IMR-90 (cell line): ENCODE measurements at regions of chr7 and their contacts with region 1.

Region 1: DNA sequence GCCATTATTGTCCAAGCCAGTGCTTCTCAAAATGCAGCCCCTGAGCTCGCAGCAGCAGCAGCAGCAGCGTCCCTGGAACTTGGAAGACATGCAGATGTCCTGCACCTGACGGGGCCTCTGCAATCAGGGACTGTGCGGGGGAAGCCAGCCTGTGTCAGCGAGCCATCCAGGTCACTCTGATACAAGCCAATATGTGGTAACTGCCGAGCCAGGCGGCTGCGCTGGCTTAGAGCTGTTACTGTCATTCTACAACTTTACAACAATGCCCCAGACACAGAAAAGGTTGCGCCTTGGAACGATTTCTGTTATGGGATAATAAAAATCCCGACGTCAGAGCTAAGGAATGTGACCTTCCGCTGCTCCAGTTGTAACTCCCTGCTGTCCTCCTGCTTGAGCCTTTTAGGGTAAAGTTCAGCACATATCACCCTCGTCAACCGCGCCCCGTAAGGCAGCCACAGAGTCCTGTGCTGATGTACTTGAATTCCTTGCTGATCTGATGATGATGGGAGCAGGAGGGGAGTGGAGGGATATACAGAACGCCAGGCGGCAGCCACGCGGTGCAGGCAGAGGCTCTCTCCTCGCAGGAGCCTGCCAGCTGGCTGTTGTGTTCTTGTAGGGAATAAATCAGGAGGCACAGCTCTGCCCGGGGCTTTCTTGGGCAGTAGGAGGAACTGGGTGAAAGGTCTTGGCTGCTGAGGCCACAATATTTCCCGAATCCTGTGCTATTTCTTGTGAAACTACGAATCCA is 20.0 kb upstream of the CRYGN start:
- DNase-seq: peak; percentile 86
- ATAC-seq: peak; percentile 93
- H3K4me3 ChIP-seq: peak overlapping the region; percentile 6; the same call in 1 of the 2 replicates
- H3K27ac ChIP-seq: peak overlapping the region; percentile 74
- H3K4me1 ChIP-seq: peaks cover 14% of the 10 kb centered on the region
- H3K27me3 ChIP-seq: no peaks in the 10 kb centered on the region
- CTCF ChIP-seq: peak; percentile 50
- POLR2A ChIP-seq: peak; percentile 22; the same call in 1 of the 2 replicates
- RAD21 ChIP-seq: peak; percentile 59

Region 2: GRCh38 chr7:151304856-151305255 is 155.0 kb before region 1 on chr7:
- CTCF ChIA-PET with region 1: no interaction called
- POLR2A ChIA-PET with region 1: interaction called, 12 read pairs
- dilution Hi-C with region 1: no loop called
- in situ Hi-C with region 1: no loop called
- intact Hi-C with region 1: no loop called
- DNase-seq: no peak
- ATAC-seq: no peak
- H3K4me3 ChIP-seq: no peak overlapping the region
- H3K27ac ChIP-seq: no peak overlapping the region
- H3K4me1 ChIP-seq: peaks cover 13% of the 10 kb centered on the region; the same call in 1 of the 2 replicates
- H3K27me3 ChIP-seq: peaks cover 31% of the 10 kb centered on the region
- CTCF ChIP-seq: no peak
- POLR2A ChIP-seq: no peak
- RAD21 ChIP-seq: no peak

Region 3: GRCh38 chr7:151398446-151399304 is 61.2 kb before region 1 on chr7:
- CTCF ChIA-PET with region 1: no interaction called
- POLR2A ChIA-PET with region 1: no interaction called
- dilution Hi-C with region 1: no loop called
- in situ Hi-C with region 1: no loop called
- intact Hi-C with region 1: no loop called
- DNase-seq: no peak
- ATAC-seq: no peak
- H3K4me3 ChIP-seq: no peak overlapping the region
- H3K27ac ChIP-seq: no peak overlapping the region
- H3K4me1 ChIP-seq: no peaks in the 10 kb centered on the region; the same call in 1 of the 2 replicates
- H3K27me3 ChIP-seq: peaks cover 13% of the 10 kb centered on the region
- CTCF ChIP-seq: no peak
- POLR2A ChIP-seq: no peak
- RAD21 ChIP-seq: no peak

Region 4: GRCh38 chr7:151754142-151754590 is 294.3 kb after region 1 on chr7:
- CTCF ChIA-PET with region 1: interaction called, 3 read pairs
- POLR2A ChIA-PET with region 1: no interaction called
- dilution Hi-C with region 1: no loop called
- in situ Hi-C with region 1: loop called (anchors 25 kb)
- intact Hi-C with region 1: loop called (anchors 1 kb)
- DNase-seq: peak; percentile 99
- ATAC-seq: peak; percentile 85
- H3K4me3 ChIP-seq: no peak overlapping the region
- H3K27ac ChIP-seq: peak overlapping the region; percentile 91
- H3K4me1 ChIP-seq: peaks cover 36% of the 10 kb centered on the region
- H3K27me3 ChIP-seq: no peaks in the 10 kb centered on the region
- CTCF ChIP-seq: peak; percentile 99
- POLR2A ChIP-seq: no peak
- RAD21 ChIP-seq: peak; percentile 74

Region 5: GRCh38 chr7:151759591-151760042 is 299.7 kb after region 1 on chr7:
- CTCF ChIA-PET with region 1: interaction called, 3 read pairs
- POLR2A ChIA-PET with region 1: no interaction called
- dilution Hi-C with region 1: no loop called
- in situ Hi-C with region 1: loop called (anchors 25 kb)
- intact Hi-C with region 1: loop called (anchors 1 kb)
- DNase-seq: peak; percentile 65
- ATAC-seq: peak; percentile 59
- H3K4me3 ChIP-seq: no peak overlapping the region
- H3K27ac ChIP-seq: no peak overlapping the region
- H3K4me1 ChIP-seq: peaks cover 30% of the 10 kb centered on the region
- H3K27me3 ChIP-seq: peaks cover 32% of the 10 kb centered on the region
- CTCF ChIP-seq: peak; percentile 88
- POLR2A ChIP-seq: no peak
- RAD21 ChIP-seq: peak; percentile 96